ENCODE measurements at regions of chr6 and their contacts with region 1.

Region 1: GRCh38 chr6:20126789-20127653 is 85.2 kb downstream of the MBOAT1 start:
- DNase-seq: peak; percentile 86
- ATAC-seq: peak; percentile 94
- H3K4me3 Mint-ChIP-seq: no peak overlapping the region
- H3K27ac Mint-ChIP-seq: peak overlapping the region; percentile 39
- H3K4me1 Mint-ChIP-seq: peaks cover 11% of the 10 kb centered on the region
- H3K27me3 Mint-ChIP-seq: no peaks in the 10 kb centered on the region
- CTCF ChIP-seq: peak; percentile 87

Region 2: DNA sequence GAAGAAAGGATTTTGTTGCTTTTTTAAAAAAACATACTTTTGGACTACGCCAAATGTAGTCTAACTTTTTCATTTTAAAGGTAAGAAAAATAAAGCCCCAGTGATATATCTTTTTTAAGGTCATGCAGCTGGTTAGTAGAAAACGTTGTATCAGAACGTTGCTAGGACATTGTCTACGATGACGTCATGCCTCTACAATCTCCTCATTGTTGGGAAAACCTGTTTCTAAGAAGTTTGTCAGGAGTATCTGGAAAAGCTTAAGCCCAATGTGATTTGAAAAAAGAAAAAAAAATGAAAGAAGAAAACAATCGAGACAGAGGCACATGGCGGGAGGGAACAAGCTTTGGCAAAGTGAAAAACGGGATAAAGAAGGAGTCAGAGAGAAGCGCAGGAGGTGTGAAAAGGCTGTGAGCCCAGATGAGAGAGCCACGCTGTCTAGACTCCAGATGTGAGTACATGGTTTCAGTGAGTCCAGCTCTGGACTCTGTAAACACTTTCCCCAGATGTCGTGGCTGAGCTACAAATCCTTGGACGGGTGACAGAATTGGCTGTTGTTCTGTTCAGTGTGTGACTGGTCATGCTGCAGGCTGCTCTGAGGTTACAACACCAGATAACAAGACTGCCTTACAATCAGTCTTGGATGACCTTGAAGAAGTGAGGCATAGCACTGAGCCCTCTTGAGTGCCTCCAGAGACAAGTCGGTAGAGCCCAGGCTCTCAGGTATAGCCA is 946.5 kb before region 1 on chr6:
- CTCF ChIA-PET with region 1: no interaction called
- POLR2A ChIA-PET with region 1: no interaction called
- DNase-seq: no peak
- ATAC-seq: no peak
- H3K4me3 Mint-ChIP-seq: no peak overlapping the region
- H3K27ac Mint-ChIP-seq: no peak overlapping the region
- H3K4me1 Mint-ChIP-seq: peaks cover 3% of the 10 kb centered on the region
- H3K27me3 Mint-ChIP-seq: no peaks in the 10 kb centered on the region
- CTCF ChIP-seq: no peak

Region 3: DNA sequence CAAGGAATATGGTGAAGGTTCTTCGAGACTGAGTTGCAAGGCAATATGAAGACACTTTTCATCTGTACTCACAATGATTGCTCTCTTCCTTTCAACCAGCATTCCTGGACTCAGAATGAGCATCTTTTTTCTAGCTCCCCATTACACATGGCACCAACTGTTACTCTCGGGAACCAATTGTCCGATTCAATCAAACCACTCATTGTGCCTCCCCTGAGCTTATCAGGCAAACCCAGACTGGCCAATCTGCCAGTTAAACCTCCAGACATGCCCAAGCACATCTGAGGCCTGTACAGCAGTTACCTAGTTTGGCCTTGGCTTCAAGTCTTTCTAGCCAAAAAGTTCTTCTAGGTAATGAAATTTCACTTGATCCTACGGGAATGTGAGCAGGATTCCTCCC is 125.7 kb before region 1 on chr6:
- CTCF ChIA-PET with region 1: no interaction called
- POLR2A ChIA-PET with region 1: no interaction called
- DNase-seq: no peak
- ATAC-seq: no peak
- H3K4me3 Mint-ChIP-seq: no peak overlapping the region
- H3K27ac Mint-ChIP-seq: no peak overlapping the region
- H3K4me1 Mint-ChIP-seq: no peaks in the 10 kb centered on the region
- H3K27me3 Mint-ChIP-seq: peaks cover 13% of the 10 kb centered on the region
- CTCF ChIP-seq: no peak

Region 4: GRCh38 chr6:20092071-20092566 is 34.9 kb before region 1 on chr6:
- CTCF ChIA-PET with region 1: interaction called, 76 read pairs
- POLR2A ChIA-PET with region 1: no interaction called
- DNase-seq: no peak
- ATAC-seq: peak; percentile 66
- H3K4me3 Mint-ChIP-seq: no peak overlapping the region
- H3K27ac Mint-ChIP-seq: peak overlapping the region; percentile 93
- H3K4me1 Mint-ChIP-seq: peaks cover 18% of the 10 kb centered on the region
- H3K27me3 Mint-ChIP-seq: no peaks in the 10 kb centered on the region
- CTCF ChIP-seq: peak; percentile 60; the same call in 1 of the 2 replicates

Region 5: DNA sequence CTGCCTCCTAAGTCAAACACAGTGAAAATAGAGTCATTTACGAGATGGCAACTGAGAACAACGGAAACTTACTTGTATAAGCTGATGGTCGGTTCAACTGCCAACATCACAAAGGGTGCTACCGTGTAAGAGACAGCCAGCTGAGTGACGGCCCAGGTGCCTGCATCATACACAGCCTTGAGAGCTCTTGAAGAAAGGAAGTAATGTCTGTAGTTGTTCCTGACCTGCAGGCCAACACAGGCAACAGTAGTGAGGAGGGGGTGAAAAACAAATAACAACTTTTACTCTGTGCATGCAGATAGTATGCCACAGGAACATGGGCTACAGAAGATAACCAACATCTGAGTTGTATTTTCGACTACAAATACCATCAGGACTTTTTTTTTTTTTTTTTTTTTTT is 17.5 kb before region 1 on chr6:
- CTCF ChIA-PET with region 1: interaction called, 11 read pairs
- POLR2A ChIA-PET with region 1: interaction called, 3 read pairs
- DNase-seq: no peak
- ATAC-seq: no peak
- H3K4me3 Mint-ChIP-seq: no peak overlapping the region
- H3K27ac Mint-ChIP-seq: no peak overlapping the region
- H3K4me1 Mint-ChIP-seq: peaks cover 5% of the 10 kb centered on the region
- H3K27me3 Mint-ChIP-seq: no peaks in the 10 kb centered on the region
- CTCF ChIP-seq: no peak

Region 6: DNA sequence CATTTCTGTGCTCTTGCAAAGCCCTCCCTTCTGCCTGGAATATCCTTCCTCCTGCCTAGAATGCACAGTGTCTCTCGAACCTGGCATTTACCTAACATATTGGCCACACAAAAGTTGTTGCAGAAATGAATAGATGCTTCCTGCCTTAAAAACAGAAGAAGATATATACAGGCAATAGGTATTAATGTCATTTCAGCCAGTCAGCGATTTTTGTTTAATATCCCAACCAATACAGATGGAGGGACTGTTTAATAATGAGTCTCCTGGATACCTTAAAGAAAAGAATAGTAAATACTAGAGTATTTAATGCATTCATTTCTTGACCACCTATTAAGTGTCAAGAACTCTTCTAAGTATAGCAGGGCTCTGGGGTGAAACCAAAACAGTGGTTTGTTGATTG is 14.9 kb after region 1 on chr6:
- CTCF ChIA-PET with region 1: interaction called, 16 read pairs
- POLR2A ChIA-PET with region 1: no interaction called
- DNase-seq: no peak
- ATAC-seq: no peak
- H3K4me3 Mint-ChIP-seq: no peak overlapping the region
- H3K27ac Mint-ChIP-seq: no peak overlapping the region
- H3K4me1 Mint-ChIP-seq: peaks cover 13% of the 10 kb centered on the region
- H3K27me3 Mint-ChIP-seq: no peaks in the 10 kb centered on the region
- CTCF ChIP-seq: no peak

Region 7: GRCh38 chr6:20212392-20213217 is 85.6 kb after region 1 on chr6 and contains the start of gene MBOAT1:
- CTCF ChIA-PET with region 1: interaction called, 18 read pairs
- POLR2A ChIA-PET with region 1: no interaction called
- DNase-seq: peak; percentile 81
- ATAC-seq: peak; percentile 90
- H3K4me3 Mint-ChIP-seq: peak within 1 kb of the TSS; percentile 91
- H3K27ac Mint-ChIP-seq: peak within 1 kb of the TSS; percentile 93
- H3K4me1 Mint-ChIP-seq: peaks cover 28% of the 10 kb centered on the region
- H3K27me3 Mint-ChIP-seq: no peaks in the 10 kb centered on the region; the same call in 1 of the 2 replicates
- CTCF ChIP-seq: no peak
- total RNA-seq, gene MBOAT1: 16.3 to 22.9 TPM (median 16.5 TPM) in 3 replicates

Region 8: GRCh38 chr6:20605581-20605980 is 478.6 kb after region 1 on chr6:
- CTCF ChIA-PET with region 1: no interaction called
- POLR2A ChIA-PET with region 1: no interaction called
- DNase-seq: no peak
- ATAC-seq: no peak
- H3K4me3 Mint-ChIP-seq: no peak overlapping the region
- H3K27ac Mint-ChIP-seq: no peak overlapping the region
- H3K4me1 Mint-ChIP-seq: peaks cover 14% of the 10 kb centered on the region; the same call in 1 of the 2 replicates
- H3K27me3 Mint-ChIP-seq: no peaks in the 10 kb centered on the region
- CTCF ChIP-seq: no peak